ENCODE measurements at regions of chr16 and their contacts with region 1.

Region 1: DNA sequence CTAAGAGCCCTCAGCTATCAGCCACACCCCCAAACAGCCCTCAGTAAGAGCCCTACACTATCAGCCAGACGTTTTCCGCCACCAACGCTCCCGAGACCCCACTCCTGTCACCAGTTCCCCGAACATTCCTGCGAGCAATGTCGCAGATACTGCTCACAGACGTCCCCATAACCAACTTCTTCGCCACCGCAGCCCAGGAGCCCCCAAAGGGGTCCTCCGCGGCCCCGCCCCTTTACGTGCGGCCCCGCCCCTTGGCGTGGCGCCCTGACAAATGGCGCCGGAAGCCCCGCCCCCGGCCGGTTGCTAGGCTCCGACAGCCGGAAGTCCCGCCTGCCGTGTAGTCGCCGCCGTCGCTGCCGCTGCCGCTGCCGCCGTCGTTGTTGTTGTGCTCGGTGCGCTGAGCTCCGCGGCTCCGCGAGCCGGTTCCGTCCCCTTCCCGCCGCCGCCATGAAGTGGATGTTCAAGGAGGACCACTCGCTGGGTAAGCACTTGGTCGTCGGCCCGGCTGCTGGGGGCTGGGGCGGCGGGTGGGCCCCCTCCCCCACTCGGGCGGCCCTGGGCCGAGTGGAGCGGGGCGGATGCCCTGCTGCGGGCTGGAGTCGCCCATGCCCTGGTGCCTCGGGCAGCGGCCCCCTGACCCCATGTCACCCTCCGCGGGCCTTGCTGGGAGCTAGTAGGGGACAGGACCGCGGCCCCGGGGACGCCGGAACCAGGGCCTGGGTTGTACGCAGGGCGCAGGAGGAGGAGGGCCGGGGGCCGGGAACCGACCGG is at the start of gene GABARAPL2:
- DNase-seq: peak; percentile 87 to 97 (median 92)
- ATAC-seq: peak; percentile 90
- H3K4me3 ChIP-seq: peak within 1 kb of the TSS; percentile 93
- H3K4me3 Mint-ChIP-seq: peak within 1 kb of the TSS; percentile 88 to 100 (median 96)
- H3K27ac ChIP-seq: peak within 1 kb of the TSS; percentile 90
- H3K27ac Mint-ChIP-seq: peak within 1 kb of the TSS; percentile 79 to 100 (median 92)
- H3K4me1 ChIP-seq: peaks cover 20 to 27% of the 10 kb centered on the region in 2 donors
- H3K4me1 Mint-ChIP-seq: peaks cover 25 to 50% (median 47%) of the 10 kb centered on the region in 7 donors
- H3K27me3 ChIP-seq: no peaks in the 10 kb centered on the region
- H3K27me3 Mint-ChIP-seq: peaks cover 8 to 16% (median 13%) of the 10 kb centered on the region in 5 donors
- total RNA-seq, gene GABARAPL2: 57.9 to 81.2 (median 75.6) TPM

Region 2: GRCh38 chr16:74666425-74667254 is 899.6 kb before region 1 on chr16 and contains the start of gene RFWD3:
- CTCF ChIA-PET with region 1: no interaction called
- POLR2A ChIA-PET with region 1: no interaction called
- intact Hi-C with region 1: loop called in 1 of 2 experiments (anchors 10 kb)
- DNase-seq: peak; percentile 80 to 99 (median 97)
- ATAC-seq: peak; percentile 100
- H3K4me3 ChIP-seq: peak within 1 kb of the TSS; percentile 89
- H3K4me3 Mint-ChIP-seq: peak within 1 kb of the TSS; percentile 87 to 98 (median 95)
- H3K27ac ChIP-seq: peak within 1 kb of the TSS; percentile 86
- H3K27ac Mint-ChIP-seq: peak within 1 kb of the TSS; percentile 92 to 97 (median 95)
- H3K4me1 ChIP-seq: peaks cover 0 to 10% of the 10 kb centered on the region in 2 donors
- H3K4me1 Mint-ChIP-seq: peaks cover 26 to 48% (median 44%) of the 10 kb centered on the region in 7 donors
- H3K27me3 ChIP-seq: no peaks in the 10 kb centered on the region
- H3K27me3 Mint-ChIP-seq: peaks cover 0 to 2% (median 0%) of the 10 kb centered on the region in 5 donors
- total RNA-seq, gene RFWD3: 39.3 to 88.0 (median 56.9) TPM

Region 3: GRCh38 chr16:75074920-75075687 is 491.1 kb before region 1 on chr16:
- CTCF ChIA-PET with region 1: no interaction called
- POLR2A ChIA-PET with region 1: no interaction called
- intact Hi-C with region 1: loop called in 1 of 2 experiments (anchors 10 kb)
- DNase-seq: peak; percentile 45 to 86 (median 77)
- ATAC-seq: peak; percentile 97
- H3K4me3 ChIP-seq: peak overlapping the region; percentile 37
- H3K4me3 Mint-ChIP-seq: peak overlapping the region; percentile 58 to 83 (median 76)
- H3K27ac ChIP-seq: peak overlapping the region; percentile 36
- H3K27ac Mint-ChIP-seq: peak overlapping the region; percentile 84 to 100 (median 89)
- H3K4me1 ChIP-seq: peaks cover 16 to 38% of the 10 kb centered on the region in 2 donors
- H3K4me1 Mint-ChIP-seq: peaks cover 42 to 76% (median 64%) of the 10 kb centered on the region in 7 donors
- H3K27me3 ChIP-seq: no peaks in the 10 kb centered on the region
- H3K27me3 Mint-ChIP-seq: peaks cover 0 to 4% (median 0%) of the 10 kb centered on the region in 5 donors

Region 4: DNA sequence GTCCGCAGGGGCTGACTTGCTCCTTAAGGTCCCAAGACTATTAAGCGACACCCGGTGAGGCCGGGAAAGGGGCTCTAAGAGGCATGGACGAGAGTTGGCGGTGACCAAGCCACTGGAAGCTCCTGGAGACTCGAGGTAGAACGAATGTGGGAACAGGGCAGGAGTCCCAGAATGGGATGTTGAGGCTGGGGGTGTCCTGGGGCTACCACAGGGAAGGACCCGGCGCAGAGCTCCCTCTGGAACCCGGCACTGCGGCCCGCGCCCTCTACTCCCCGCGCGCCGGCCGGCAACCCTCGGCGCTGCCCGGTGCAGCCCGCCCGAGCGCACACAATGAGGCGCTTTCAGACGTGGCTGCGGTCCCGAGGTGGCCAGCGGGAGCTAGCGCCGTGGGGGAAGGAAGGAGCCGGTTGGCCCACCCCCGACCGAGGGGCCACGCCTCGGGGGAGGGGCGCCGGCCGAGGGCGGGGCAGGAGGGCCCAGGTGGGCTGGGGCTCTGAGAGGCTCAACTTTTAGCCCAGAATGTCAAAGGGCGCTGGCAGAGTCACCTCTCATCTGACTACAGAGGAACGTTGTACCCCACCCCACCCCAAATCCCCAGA is 71.0 kb before region 1 on chr16 and contains the start of gene CHST6:
- CTCF ChIA-PET with region 1: no interaction called
- POLR2A ChIA-PET with region 1: no interaction called
- intact Hi-C with region 1: no loop called
- DNase-seq: peak in 1 of 9 donors; percentile 31
- ATAC-seq: peak; percentile 65
- H3K4me3 ChIP-seq: no peak within 1 kb of the TSS
- H3K4me3 Mint-ChIP-seq: peak within 1 kb of the TSS; percentile 56 to 80 (median 70)
- H3K27ac ChIP-seq: no peak within 1 kb of the TSS
- H3K27ac Mint-ChIP-seq: no peak within 1 kb of the TSS
- H3K4me1 ChIP-seq: no peaks in the 10 kb centered on the region
- H3K4me1 Mint-ChIP-seq: peaks cover 6 to 8% (median 7%) of the 10 kb centered on the region in 7 donors
- H3K27me3 ChIP-seq: no peaks in the 10 kb centered on the region
- H3K27me3 Mint-ChIP-seq: peaks cover 21 to 35% (median 28%) of the 10 kb centered on the region in 5 donors
- total RNA-seq, gene CHST6: 0.05 to 0.14 (median 0.11) TPM in 3 of 5 experiments, not detected in the others

Region 5: GRCh38 chr16:75519881-75520280 is 46.3 kb before region 1 on chr16:
- CTCF ChIA-PET with region 1: interaction called, 6 read pairs
- POLR2A ChIA-PET with region 1: interaction called, 7 read pairs
- intact Hi-C with region 1: loop called (anchors 1 kb)
- DNase-seq: no peak
- ATAC-seq: no peak
- H3K4me3 ChIP-seq: no peak overlapping the region
- H3K4me3 Mint-ChIP-seq: no peak overlapping the region
- H3K27ac ChIP-seq: no peak overlapping the region
- H3K27ac Mint-ChIP-seq: no peak overlapping the region
- H3K4me1 ChIP-seq: peaks cover 0 to 3% of the 10 kb centered on the region in 2 donors
- H3K4me1 Mint-ChIP-seq: peaks cover 5 to 17% (median 13%) of the 10 kb centered on the region in 7 donors
- H3K27me3 ChIP-seq: no peaks in the 10 kb centered on the region
- H3K27me3 Mint-ChIP-seq: peaks cover 0 to 9% (median 0%) of the 10 kb centered on the region in 5 donors

Region 6: GRCh38 chr16:77190478-77191258 is 1624.4 kb after region 1 on chr16 and contains the start of gene MON1B:
- CTCF ChIA-PET with region 1: no interaction called
- POLR2A ChIA-PET with region 1: interaction called, 3 read pairs
- intact Hi-C with region 1: loop called (anchors 1 kb)
- DNase-seq: peak; percentile 86 to 98 (median 97)
- ATAC-seq: peak; percentile 96
- H3K4me3 ChIP-seq: peak within 1 kb of the TSS; percentile 97
- H3K4me3 Mint-ChIP-seq: peak within 1 kb of the TSS; percentile 90 to 99 (median 96)
- H3K27ac ChIP-seq: peak within 1 kb of the TSS; percentile 86
- H3K27ac Mint-ChIP-seq: peak within 1 kb of the TSS; percentile 98 to 100 (median 100)
- H3K4me1 ChIP-seq: peaks cover 13 to 23% of the 10 kb centered on the region in 2 donors
- H3K4me1 Mint-ChIP-seq: peaks cover 36 to 55% (median 46%) of the 10 kb centered on the region in 7 donors
- H3K27me3 ChIP-seq: no peaks in the 10 kb centered on the region
- H3K27me3 Mint-ChIP-seq: peaks cover 0 to 10% (median 4%) of the 10 kb centered on the region in 5 donors
- total RNA-seq, gene MON1B: 60.8 to 87.2 (median 67.3) TPM

Measured in naive thymus-derived CD4-positive, alpha-beta T cell (primary cell).